Activated CD4-positive, alpha-beta T cell treated with anti-CD3 and anti-CD28 coated beads for 36 hours (primary cell): ENCODE measurements at regions of chr16 and their contacts with region 1.

Region 1: GRCh38 chr16:352547-353403 is at the start of gene AXIN1:
- DNase-seq: peak; percentile 100
- ATAC-seq: peak; percentile 89
- H3K4me3 Mint-ChIP-seq: peak within 1 kb of the TSS; percentile 80
- H3K27ac Mint-ChIP-seq: peak within 1 kb of the TSS; percentile 79
- H3K4me1 Mint-ChIP-seq: peaks cover 45% of the 10 kb centered on the region
- H3K27me3 Mint-ChIP-seq: no peaks in the 10 kb centered on the region
- total RNA-seq, gene AXIN1: 20.0 to 23.8 TPM

Region 2: DNA sequence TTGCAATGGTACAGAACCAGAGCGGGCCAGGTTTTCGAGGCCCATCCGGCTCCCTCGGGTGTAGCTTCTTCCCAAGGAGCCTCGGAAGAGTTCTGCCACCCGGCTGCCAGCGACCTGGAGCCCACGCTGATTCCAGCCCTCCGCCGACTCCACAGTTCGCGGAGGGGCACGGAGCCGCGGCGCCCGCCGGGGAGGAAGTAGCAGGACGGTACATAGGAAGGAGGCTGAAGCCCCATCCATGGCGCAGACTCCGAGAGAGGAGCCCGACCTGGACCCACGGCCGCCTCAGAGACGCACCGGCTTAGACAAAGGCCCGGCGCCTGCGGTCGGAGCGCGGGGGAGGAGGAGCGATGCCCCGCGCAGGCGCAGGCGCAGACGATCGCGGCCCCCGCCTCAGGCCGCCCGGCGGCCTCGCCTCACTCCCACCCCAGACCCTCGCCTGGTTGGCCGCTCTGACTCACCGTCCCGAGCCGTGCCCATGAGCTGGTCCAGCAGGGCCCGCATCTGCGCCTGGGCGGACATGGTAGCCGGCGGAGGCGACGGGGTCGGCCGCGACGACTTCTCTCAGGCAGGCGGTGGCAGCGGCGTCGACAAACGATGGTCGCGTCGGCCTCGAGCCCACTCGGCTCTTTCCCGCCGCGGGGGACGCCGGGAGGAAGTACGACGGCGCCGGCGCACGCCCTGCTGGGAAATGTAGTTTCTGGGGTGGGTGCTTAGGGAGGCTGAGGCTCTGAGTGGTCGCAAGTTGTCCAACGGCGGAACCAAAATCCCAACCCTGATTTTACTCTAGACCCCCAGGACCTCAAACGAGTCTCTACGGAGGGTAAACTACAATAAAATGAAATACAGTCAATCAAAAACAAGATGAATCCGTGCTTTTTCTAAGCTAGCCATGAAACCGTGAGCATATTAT is 123.7 kb before region 1 on chr16 and contains the start of gene LUC7L:
- CTCF ChIA-PET with region 1: interaction called, 3 read pairs
- POLR2A ChIA-PET with region 1: no interaction called
- intact Hi-C with region 1: loop called in 1 of 2 experiments (anchors 1 kb)
- DNase-seq: peak; percentile 93
- ATAC-seq: peak; percentile 90
- H3K4me3 Mint-ChIP-seq: peak within 1 kb of the TSS; percentile 92
- H3K27ac Mint-ChIP-seq: peak within 1 kb of the TSS; percentile 85
- H3K4me1 Mint-ChIP-seq: peaks cover 30% of the 10 kb centered on the region
- H3K27me3 Mint-ChIP-seq: no peaks in the 10 kb centered on the region
- total RNA-seq, gene LUC7L: 44.6 to 50.1 TPM

Region 3: GRCh38 chr16:370443-370842 is 17.7 kb after region 1 on chr16 and contains the start of gene MRPL28:
- CTCF ChIA-PET with region 1: interaction called, 3 read pairs
- POLR2A ChIA-PET with region 1: no interaction called
- intact Hi-C with region 1: loop called (anchors 1 kb)
- DNase-seq: peak; percentile 97
- ATAC-seq: peak; percentile 100
- H3K4me3 Mint-ChIP-seq: peak within 1 kb of the TSS; percentile 78
- H3K27ac Mint-ChIP-seq: peak within 1 kb of the TSS; percentile 92
- H3K4me1 Mint-ChIP-seq: peaks cover 17% of the 10 kb centered on the region
- H3K27me3 Mint-ChIP-seq: no peaks in the 10 kb centered on the region
- total RNA-seq, gene MRPL28: 90.2 to 94.4 TPM

Region 4: GRCh38 chr16:425082-425718 is 72.4 kb after region 1 on chr16 and contains the start of gene RAB11FIP3:
- CTCF ChIA-PET with region 1: no interaction called
- POLR2A ChIA-PET with region 1: no interaction called
- intact Hi-C with region 1: loop called in 1 of 2 experiments (anchors 2 kb)
- DNase-seq: peak; percentile 90
- ATAC-seq: peak; percentile 93
- H3K4me3 Mint-ChIP-seq: peak within 1 kb of the TSS; percentile 74
- H3K27ac Mint-ChIP-seq: peak within 1 kb of the TSS; percentile 47
- H3K4me1 Mint-ChIP-seq: peaks cover 30% of the 10 kb centered on the region
- H3K27me3 Mint-ChIP-seq: peaks cover 5% of the 10 kb centered on the region
- total RNA-seq, gene RAB11FIP3: 14.2 to 17.0 TPM

Region 5: DNA sequence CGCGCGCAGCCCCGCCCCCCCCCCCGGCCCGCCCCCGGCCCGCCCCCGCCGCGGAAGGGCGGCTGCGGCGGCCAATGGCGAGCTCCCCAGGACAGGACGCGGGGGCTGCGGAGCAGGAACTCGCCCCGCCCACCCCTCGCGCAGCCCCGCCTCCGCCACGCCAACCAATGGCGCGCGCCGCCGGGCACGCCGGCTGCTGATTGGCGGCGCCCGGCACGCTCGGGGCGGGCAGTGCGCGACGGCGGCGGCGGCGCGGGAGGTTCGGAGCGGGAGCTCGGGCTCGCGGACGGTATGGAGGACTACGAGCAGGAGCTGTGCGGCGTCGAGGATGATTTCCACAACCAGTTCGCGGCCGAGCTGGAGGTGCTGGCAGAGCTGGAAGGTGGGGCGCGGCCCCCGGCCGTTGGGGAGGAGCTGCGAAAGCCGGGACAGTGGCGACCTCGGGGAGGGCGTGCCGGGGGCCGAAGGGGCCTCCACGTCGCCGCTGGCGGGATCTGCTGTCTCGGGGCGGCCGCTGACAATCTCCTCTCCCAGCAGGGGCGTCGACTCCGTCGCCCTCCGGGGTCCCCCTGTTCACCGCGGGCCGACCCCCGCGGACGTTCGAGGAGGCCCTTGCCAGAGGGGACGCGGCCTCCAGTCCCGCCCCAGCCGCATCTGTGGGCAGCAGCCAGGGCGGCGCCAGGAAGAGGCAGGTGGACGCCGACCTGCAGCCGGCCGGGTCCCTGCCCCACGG is 435.8 kb after region 1 on chr16 and contains the start of gene CHTF18:
- CTCF ChIA-PET with region 1: no interaction called
- POLR2A ChIA-PET with region 1: no interaction called
- intact Hi-C with region 1: loop called in 1 of 2 experiments (anchors 1 kb)
- DNase-seq: peak; percentile 97
- ATAC-seq: peak; percentile 98
- H3K4me3 Mint-ChIP-seq: peak within 1 kb of the TSS; percentile 88
- H3K27ac Mint-ChIP-seq: peak within 1 kb of the TSS; percentile 78
- H3K4me1 Mint-ChIP-seq: peaks cover 13% of the 10 kb centered on the region
- H3K27me3 Mint-ChIP-seq: no peaks in the 10 kb centered on the region
- total RNA-seq, gene CHTF18: 82.2 to 105 TPM